ENCODE measurements at regions of chr6 and their contacts with region 1.

Region 1: DNA sequence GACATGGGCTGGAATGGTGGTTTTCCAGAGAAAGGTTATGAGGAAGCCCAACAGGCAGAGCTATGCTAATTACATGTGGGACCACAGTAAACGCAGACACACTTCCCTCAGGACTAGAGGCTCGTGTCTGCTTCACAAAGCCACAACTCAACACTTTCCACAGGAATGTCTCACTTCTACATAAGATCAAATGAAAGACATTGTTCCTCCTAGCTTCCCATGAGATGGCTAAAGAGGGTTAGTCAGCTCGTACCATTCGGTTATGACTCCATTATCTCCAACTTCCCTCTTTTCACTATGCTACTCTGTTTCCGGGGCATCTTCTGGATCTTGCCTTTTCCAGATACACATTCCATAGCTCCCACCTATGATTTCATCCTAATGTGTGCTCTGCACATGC is 29.1 kb upstream of the ZC3H12D start:
- DNase-seq: no peak
- ATAC-seq: no peak
- H3K4me3 ChIP-seq: no peak overlapping the region
- H3K4me3 Mint-ChIP-seq: no peak overlapping the region
- H3K27ac ChIP-seq: no peak overlapping the region
- H3K27ac Mint-ChIP-seq: peak overlapping the region; percentile 46
- H3K4me1 ChIP-seq: peaks cover 0 to 3% of the 10 kb centered on the region in 2 donors
- H3K4me1 Mint-ChIP-seq: peaks cover 8% of the 10 kb centered on the region
- H3K27me3 ChIP-seq: no peaks in the 10 kb centered on the region
- H3K27me3 Mint-ChIP-seq: no peaks in the 10 kb centered on the region
- CTCF ChIP-seq: no peak

Region 2: GRCh38 chr6:149028767-149029405 is 485.0 kb before region 1 on chr6:
- CTCF ChIA-PET with region 1: interaction called, 66 read pairs
- POLR2A ChIA-PET with region 1: no interaction called
- intact Hi-C with region 1: loop called (anchors 1 kb)
- DNase-seq: peak; percentile 88
- ATAC-seq: peak; percentile 53
- H3K4me3 ChIP-seq: no peak overlapping the region
- H3K4me3 Mint-ChIP-seq: no peak overlapping the region
- H3K27ac ChIP-seq: no peak overlapping the region
- H3K27ac Mint-ChIP-seq: no peak overlapping the region
- H3K4me1 ChIP-seq: peaks cover 3 to 19% of the 10 kb centered on the region in 2 donors
- H3K4me1 Mint-ChIP-seq: peaks cover 28% of the 10 kb centered on the region
- H3K27me3 ChIP-seq: no peaks in the 10 kb centered on the region
- H3K27me3 Mint-ChIP-seq: no peaks in the 10 kb centered on the region
- CTCF ChIP-seq: peak; percentile 92

Region 3: GRCh38 chr6:149190224-149190831 is 323.6 kb before region 1 on chr6:
- CTCF ChIA-PET with region 1: interaction called, 28 read pairs
- POLR2A ChIA-PET with region 1: no interaction called
- intact Hi-C with region 1: loop called (anchors 1 kb)
- DNase-seq: peak; percentile 77
- ATAC-seq: peak; percentile 75
- H3K4me3 ChIP-seq: no peak overlapping the region
- H3K4me3 Mint-ChIP-seq: no peak overlapping the region
- H3K27ac ChIP-seq: no peak overlapping the region
- H3K27ac Mint-ChIP-seq: no peak overlapping the region
- H3K4me1 ChIP-seq: peaks cover 0 to 8% of the 10 kb centered on the region in 2 donors
- H3K4me1 Mint-ChIP-seq: peaks cover 10% of the 10 kb centered on the region
- H3K27me3 ChIP-seq: peaks cover 0 to 3% (median 0%) of the 10 kb centered on the region in 4 experiments
- H3K27me3 Mint-ChIP-seq: no peaks in the 10 kb centered on the region
- CTCF ChIP-seq: peak; percentile 77

Region 4: GRCh38 chr6:149454386-149454848 is 59.5 kb before region 1 on chr6:
- CTCF ChIA-PET with region 1: interaction called, 65 read pairs
- POLR2A ChIA-PET with region 1: no interaction called
- intact Hi-C with region 1: no loop called
- DNase-seq: no peak
- ATAC-seq: no peak
- H3K4me3 ChIP-seq: no peak overlapping the region
- H3K4me3 Mint-ChIP-seq: no peak overlapping the region
- H3K27ac ChIP-seq: peak overlapping the region in 1 of 2 donors; percentile 55
- H3K27ac Mint-ChIP-seq: no peak overlapping the region
- H3K4me1 ChIP-seq: no peaks in the 10 kb centered on the region
- H3K4me1 Mint-ChIP-seq: peaks cover 17% of the 10 kb centered on the region
- H3K27me3 ChIP-seq: no peaks in the 10 kb centered on the region
- H3K27me3 Mint-ChIP-seq: no peaks in the 10 kb centered on the region
- CTCF ChIP-seq: no peak

Region 5: DNA sequence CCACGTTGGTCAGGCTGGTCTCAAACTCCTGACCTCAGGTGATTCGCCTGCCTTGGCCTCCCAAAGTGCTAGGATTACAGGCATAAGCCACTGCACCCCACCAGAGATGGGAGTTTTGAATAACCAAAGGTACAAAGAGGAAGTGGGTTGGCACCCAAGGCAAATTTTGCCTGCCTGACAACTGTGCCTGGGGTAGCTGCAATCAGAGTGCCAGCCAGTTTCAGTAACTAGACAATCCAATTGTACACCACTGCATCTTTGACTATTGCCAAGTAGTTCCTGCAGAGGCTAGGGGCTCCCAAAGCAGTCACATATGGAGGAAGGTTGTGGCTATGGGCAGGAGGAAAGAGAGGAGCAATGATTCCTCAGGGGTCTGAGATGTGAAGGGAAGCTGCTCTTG is 45.7 kb before region 1 on chr6:
- CTCF ChIA-PET with region 1: interaction called, 65 read pairs
- POLR2A ChIA-PET with region 1: interaction called, 3 read pairs
- intact Hi-C with region 1: loop called (anchors 1 kb)
- DNase-seq: peak; percentile 79
- ATAC-seq: peak; percentile 48
- H3K4me3 ChIP-seq: peak overlapping the region; percentile 21 to 67 (median 40)
- H3K4me3 Mint-ChIP-seq: peak overlapping the region; percentile 88
- H3K27ac ChIP-seq: peak overlapping the region; percentile 90 to 97
- H3K27ac Mint-ChIP-seq: peak overlapping the region; percentile 95
- H3K4me1 ChIP-seq: peaks cover 93 to 100% of the 10 kb centered on the region in 2 donors
- H3K4me1 Mint-ChIP-seq: peaks cover 90% of the 10 kb centered on the region
- H3K27me3 ChIP-seq: no peaks in the 10 kb centered on the region
- H3K27me3 Mint-ChIP-seq: no peaks in the 10 kb centered on the region
- CTCF ChIP-seq: no peak

Region 6: DNA sequence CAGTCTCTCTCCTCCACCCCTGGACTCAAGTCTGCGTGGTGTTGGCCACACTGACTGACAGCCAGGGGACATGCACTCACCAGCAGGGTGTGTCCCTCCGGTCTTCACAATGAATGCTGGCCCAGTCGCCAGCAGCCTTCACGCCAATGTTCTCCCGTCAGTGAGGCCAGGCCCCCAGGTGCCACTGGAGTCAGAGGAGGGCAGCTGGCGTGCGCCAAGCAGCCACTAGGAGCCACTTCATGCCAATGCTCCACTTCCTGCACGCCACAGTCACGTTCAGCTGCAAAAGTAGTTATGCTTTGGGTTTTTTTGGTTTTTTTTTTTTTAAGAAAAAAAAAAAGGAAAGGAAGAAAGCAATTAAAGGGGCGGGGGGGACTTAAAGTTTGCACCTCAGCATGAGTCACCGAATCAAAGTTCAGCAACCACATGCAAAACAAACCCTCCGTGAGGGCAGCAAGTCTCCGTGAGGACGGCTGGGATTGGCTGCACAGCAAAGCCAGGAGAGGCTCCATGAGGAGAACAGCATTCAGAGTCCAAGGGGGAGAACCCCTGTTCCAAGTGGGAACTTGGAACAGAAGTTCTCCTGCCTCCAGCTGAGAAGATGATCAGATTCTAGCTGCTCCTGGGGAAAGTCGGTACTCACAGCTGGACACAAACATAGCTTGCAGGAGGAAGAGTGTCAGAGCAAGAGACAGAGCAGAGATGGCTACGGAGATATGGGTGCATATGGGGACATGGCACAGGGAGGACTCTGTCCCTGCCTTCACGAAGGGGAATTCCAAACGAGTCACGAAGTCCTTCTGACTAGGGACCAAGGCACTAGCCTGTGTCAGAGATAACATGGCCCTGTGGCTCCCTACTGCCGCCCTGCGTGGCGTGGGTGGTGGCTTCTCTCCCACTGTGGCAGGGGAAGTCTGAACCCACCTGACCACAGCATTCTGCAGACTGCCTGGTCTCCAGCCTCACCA is 28.9 kb before region 1 on chr6 and contains the start of gene ZC3H12D:
- CTCF ChIA-PET with region 1: interaction called, 9 read pairs
- POLR2A ChIA-PET with region 1: interaction called, 11 read pairs
- intact Hi-C with region 1: loop called (anchors 1 kb)
- DNase-seq: peak; percentile 88
- ATAC-seq: peak; percentile 54
- H3K4me3 ChIP-seq: peak within 1 kb of the TSS; percentile 55 to 77 (median 71)
- H3K4me3 Mint-ChIP-seq: peak within 1 kb of the TSS; percentile 94
- H3K27ac ChIP-seq: peak within 1 kb of the TSS; percentile 94 to 98
- H3K27ac Mint-ChIP-seq: peak within 1 kb of the TSS; percentile 99
- H3K4me1 ChIP-seq: peaks cover 78 to 91% of the 10 kb centered on the region in 2 donors
- H3K4me1 Mint-ChIP-seq: peaks cover 77% of the 10 kb centered on the region
- H3K27me3 ChIP-seq: no peaks in the 10 kb centered on the region
- H3K27me3 Mint-ChIP-seq: no peaks in the 10 kb centered on the region
- CTCF ChIP-seq: peak; percentile 70
- total RNA-seq, gene ZC3H12D: 190 and 215 TPM in 2 replicates

Region 7: GRCh38 chr6:149499066-149499465 is 14.8 kb before region 1 on chr6:
- CTCF ChIA-PET with region 1: interaction called, 14 read pairs
- POLR2A ChIA-PET with region 1: interaction called, 12 read pairs
- intact Hi-C with region 1: no loop called
- DNase-seq: no peak
- ATAC-seq: no peak
- H3K4me3 ChIP-seq: no peak overlapping the region
- H3K4me3 Mint-ChIP-seq: no peak overlapping the region
- H3K27ac ChIP-seq: peak overlapping the region in 1 of 2 donors; percentile 21
- H3K27ac Mint-ChIP-seq: peak overlapping the region; percentile 74
- H3K4me1 ChIP-seq: peaks cover 26 to 27% of the 10 kb centered on the region in 2 donors
- H3K4me1 Mint-ChIP-seq: peaks cover 55% of the 10 kb centered on the region
- H3K27me3 ChIP-seq: no peaks in the 10 kb centered on the region
- H3K27me3 Mint-ChIP-seq: no peaks in the 10 kb centered on the region
- CTCF ChIP-seq: no peak

Measured in B cell (primary cell).